Tibial artery (tissue), 4 donors: ENCODE measurements at regions of chr1 and their contacts with region 1.

Region 1: DNA sequence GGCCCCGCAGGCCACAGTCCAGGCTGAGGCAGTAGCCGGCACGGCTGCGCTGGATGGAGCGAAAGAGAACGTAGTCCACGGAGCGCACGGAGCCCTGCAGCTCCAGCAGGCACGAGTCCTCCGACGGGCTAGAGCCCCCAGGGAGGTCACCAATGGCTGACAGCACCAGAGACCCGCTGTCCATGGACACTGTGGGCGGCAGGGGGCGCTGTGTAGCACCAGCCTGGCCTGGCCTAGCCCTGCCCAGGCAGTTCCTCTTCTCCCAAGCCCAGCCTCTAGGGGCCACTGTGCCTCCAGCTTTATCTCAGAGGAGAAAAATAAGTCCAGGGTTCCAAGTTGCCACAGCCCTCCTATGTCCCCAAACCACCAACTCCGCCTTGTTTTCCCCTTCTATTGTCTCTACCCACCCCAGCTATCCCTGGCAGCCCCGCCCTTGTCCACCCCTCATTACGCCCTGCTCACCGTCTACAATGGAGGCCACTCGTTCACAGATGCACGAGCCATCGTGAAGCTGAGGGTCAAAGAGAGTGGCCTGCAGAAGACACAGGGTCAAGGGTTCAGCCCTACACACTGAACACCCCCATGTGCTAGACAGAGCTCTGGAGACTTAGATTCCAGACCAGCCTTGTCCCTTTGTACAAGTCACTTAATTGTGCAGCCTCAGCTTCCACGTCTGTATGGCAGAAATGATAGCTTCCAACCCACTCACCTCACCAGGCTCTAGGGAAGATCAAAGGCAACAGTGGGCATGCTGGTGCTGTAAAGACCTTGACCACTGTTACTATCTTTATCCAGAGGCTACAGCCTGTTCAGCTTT is 4.4 kb downstream of the ENTREP3 start:
- DNase-seq: peak; percentile 90 to 94
- H3K4me3 ChIP-seq: peak overlapping the region in 1 of 2 donors; percentile 19
- H3K27ac ChIP-seq: peak overlapping the region; percentile 56 to 59
- H3K4me1 ChIP-seq: peaks cover 0 to 39% (median 32%) of the 10 kb centered on the region in 4 donors
- H3K27me3 ChIP-seq: no peaks in the 10 kb centered on the region
- CTCF ChIP-seq: peak; percentile 100

Region 2: GRCh38 chr1:155323798-155324610 is 73.2 kb after region 1 on chr1:
- intact Hi-C with region 1: loop called (anchors 5 kb)
- DNase-seq: peak; percentile 97 to 99
- H3K4me3 ChIP-seq: peak overlapping the region; percentile 65 to 91
- H3K27ac ChIP-seq: peak overlapping the region; percentile 89 to 99
- H3K4me1 ChIP-seq: peaks cover 0 to 51% (median 37%) of the 10 kb centered on the region in 4 donors
- H3K27me3 ChIP-seq: no peaks in the 10 kb centered on the region
- CTCF ChIP-seq: no peak

Region 3: DNA sequence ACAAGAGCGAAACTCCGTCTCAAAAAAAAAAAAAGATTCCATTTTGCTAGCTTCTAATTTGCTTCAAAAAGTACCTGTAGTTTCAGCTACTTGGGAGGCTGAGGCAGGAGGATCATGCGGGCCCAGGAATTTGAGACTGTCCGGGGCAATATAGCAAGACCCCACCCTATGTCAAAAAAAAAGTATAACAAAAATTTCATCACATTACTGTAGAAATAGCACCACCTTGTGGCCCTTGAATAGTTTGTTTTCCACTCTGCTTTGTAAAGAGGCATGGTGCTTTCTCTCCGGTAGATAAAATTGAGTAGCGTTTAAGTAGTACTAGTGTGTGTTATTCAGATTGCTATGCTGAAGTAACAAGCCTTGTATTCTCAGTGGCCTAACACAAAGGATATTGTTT is 340.9 kb after region 1 on chr1:
- intact Hi-C with region 1: loop called (anchors 2 kb)
- DNase-seq: no peak
- H3K4me3 ChIP-seq: no peak overlapping the region
- H3K27ac ChIP-seq: no peak overlapping the region
- H3K4me1 ChIP-seq: no peaks in the 10 kb centered on the region
- H3K27me3 ChIP-seq: no peaks in the 10 kb centered on the region
- CTCF ChIP-seq: peak; percentile 50 to 63